Tibial artery (tissue), 4 donors: ENCODE measurements at regions of chr4 and their contacts with region 1.

Region 1: DNA sequence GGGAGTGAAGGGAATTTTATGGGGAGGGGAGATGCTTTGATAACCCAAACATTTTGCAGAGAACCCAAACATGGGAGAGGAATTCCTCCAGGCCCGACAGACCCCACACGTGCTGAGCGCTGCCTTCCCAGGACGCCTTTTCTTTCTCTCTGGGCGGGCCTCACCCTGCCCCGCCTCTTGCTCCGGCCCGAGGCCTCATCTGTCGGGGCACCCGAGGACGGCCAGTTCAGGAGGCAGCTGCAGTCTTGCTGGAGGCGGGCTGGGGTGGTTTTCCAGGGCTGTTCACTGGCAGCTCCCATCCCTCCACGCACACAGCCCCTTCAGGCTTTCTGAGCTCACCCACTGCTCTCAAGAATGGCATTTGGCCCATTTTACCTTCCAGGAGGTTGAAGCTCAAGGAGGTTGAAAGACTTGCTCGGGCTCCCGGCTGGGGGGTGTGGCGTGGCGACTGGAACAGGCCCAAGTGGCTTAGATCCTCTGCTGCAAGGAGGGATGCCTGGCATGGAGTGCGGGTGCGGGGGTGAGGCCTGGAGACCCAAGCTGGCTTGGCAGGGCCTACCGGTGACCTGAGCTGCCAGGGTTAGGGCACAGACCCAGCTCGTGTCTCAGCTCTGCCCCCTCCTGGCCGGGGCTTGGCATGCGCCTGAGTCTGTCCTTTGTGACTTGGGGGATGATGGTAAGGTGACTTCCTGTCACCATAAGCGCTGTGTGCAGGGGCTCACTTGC is 99.2 kb downstream of the PSAPL1 start:
- DNase-seq: peak in 1 of 2 donors; percentile 73
- H3K4me3 ChIP-seq: no peak overlapping the region
- H3K27ac ChIP-seq: peak overlapping the region in 1 of 2 donors; percentile 36
- H3K4me1 ChIP-seq: peaks cover 0 to 23% (median 9%) of the 10 kb centered on the region in 4 donors
- H3K27me3 ChIP-seq: no peaks in the 10 kb centered on the region
- CTCF ChIP-seq: peak; percentile 37 to 50

Region 2: GRCh38 chr4:7299010-7299907 is 36.2 kb before region 1 on chr4:
- intact Hi-C with region 1: no loop called
- DNase-seq: no peak
- H3K4me3 ChIP-seq: no peak overlapping the region
- H3K27ac ChIP-seq: no peak overlapping the region
- H3K4me1 ChIP-seq: peaks cover 3 to 10% (median 8%) of the 10 kb centered on the region in 4 donors
- H3K27me3 ChIP-seq: peaks cover 0 to 27% of the 10 kb centered on the region in 2 donors
- CTCF ChIP-seq: no peak

Region 3: DNA sequence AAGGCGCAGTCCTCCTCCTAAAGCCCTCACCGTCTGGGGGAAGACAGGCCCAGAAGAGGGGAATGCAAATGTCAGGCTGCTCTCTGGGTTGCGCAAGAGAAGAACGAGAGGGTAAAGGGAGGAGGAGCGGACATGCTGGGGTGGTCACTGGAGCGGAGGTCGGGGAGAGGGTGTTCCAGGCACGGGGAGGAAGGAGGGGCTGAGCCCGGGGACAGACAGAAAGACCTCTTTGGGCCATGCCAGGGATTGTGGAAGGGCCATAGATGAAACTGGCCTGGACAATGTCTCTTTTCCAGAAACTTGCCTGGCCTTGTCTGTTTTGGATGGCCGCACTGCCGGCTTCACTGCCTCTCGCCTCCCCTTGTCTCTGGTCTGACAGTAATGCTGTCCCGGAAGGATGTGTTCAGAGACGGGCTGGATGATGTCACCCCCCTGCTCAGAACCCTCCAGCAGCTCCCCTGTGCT is 22.1 kb before region 1 on chr4:
- intact Hi-C with region 1: no loop called
- DNase-seq: no peak
- H3K4me3 ChIP-seq: no peak overlapping the region
- H3K27ac ChIP-seq: no peak overlapping the region
- H3K4me1 ChIP-seq: no peaks in the 10 kb centered on the region
- H3K27me3 ChIP-seq: peaks cover 0 to 9% of the 10 kb centered on the region in 2 donors
- CTCF ChIP-seq: no peak

Region 4: GRCh38 chr4:7719354-7720174 is 384.1 kb after region 1 on chr4:
- intact Hi-C with region 1: loop called (anchors 10 kb)
- DNase-seq: peak in 1 of 2 donors; percentile 35
- H3K4me3 ChIP-seq: no peak overlapping the region
- H3K27ac ChIP-seq: no peak overlapping the region
- H3K4me1 ChIP-seq: peaks cover 0 to 6% (median 2%) of the 10 kb centered on the region in 4 donors
- H3K27me3 ChIP-seq: peaks cover 0 to 9% of the 10 kb centered on the region in 2 donors
- CTCF ChIP-seq: peak; percentile 72 to 78